Activated CD4-positive, alpha-beta memory T cell treated with anti-CD3 and anti-CD28 coated beads for 36 hours (primary cell): ENCODE measurements at regions of chr5 and their contacts with region 1.

Region 1: DNA sequence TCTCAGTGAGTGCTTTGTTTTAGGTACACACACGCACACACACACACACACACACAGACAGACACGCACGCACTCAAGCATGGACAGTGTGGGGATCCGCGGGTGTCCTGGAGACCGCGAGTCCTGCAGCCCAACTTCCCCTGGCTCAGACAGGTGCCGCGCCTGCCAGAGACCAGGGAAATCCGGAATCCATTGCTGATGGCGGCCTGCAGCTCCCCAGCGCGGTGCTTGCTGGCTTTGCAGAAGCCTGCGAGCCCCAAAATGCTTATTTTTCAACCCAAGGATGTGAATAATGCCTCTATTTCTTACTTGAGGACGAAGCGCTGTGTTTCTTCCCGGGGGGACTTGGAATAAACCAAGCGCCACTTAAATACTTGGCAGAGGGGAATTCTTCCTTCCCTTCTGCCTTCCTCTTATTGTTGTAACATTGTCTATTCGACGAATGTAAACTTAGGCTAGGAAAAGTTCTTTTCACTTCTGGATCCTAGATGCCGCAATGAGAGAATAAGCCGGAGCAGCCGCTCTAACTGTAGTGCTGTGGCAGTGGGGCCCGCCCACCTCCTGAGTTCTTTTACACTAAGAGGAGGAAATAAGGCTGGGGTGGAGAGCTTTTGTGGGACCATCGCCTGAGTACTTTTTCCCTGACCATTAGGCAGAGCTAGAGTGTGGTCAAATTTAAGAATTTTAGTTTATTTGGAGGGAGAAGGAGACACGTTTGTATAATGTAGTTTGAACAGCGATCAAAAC is 802 bp downstream of the ITGA2 start:
- DNase-seq: peak; percentile 55
- H3K4me3 Mint-ChIP-seq: peak overlapping the region; percentile 73
- H3K27ac Mint-ChIP-seq: no peak overlapping the region
- H3K4me1 Mint-ChIP-seq: peaks cover 26% of the 10 kb centered on the region
- H3K27me3 Mint-ChIP-seq: peaks cover 9% of the 10 kb centered on the region

Region 2: DNA sequence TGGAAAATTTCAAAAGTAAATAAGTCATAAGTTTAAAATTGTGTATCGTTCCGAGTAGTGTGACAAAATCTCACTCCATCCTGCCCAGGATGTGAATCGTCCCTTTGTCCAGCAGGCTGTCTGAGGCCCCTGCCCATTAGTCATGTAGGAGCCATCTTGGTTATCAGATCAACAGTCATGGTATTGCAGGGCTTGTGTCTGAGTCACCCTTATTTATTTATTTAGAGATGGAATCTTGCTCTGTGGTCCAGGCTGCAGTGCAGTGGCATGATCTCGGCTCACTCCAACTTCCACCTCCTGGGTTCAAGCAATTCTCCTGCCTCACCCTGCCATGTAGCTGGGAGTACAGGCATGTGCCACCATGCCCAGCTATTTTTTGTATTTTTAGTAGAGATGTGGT is 29.4 kb after region 1 on chr5:
- CTCF ChIA-PET with region 1: no interaction called
- POLR2A ChIA-PET with region 1: no interaction called
- intact Hi-C with region 1: no loop called
- DNase-seq: no peak
- H3K4me3 Mint-ChIP-seq: no peak overlapping the region
- H3K27ac Mint-ChIP-seq: no peak overlapping the region
- H3K4me1 Mint-ChIP-seq: peaks cover 14% of the 10 kb centered on the region
- H3K27me3 Mint-ChIP-seq: peaks cover 2% of the 10 kb centered on the region

Region 3: GRCh38 chr5:53035868-53036381 is 46.0 kb after region 1 on chr5:
- CTCF ChIA-PET with region 1: interaction called, 11 read pairs
- POLR2A ChIA-PET with region 1: interaction called, 6 read pairs
- intact Hi-C with region 1: loop called (anchors 1 kb)
- DNase-seq: no peak
- H3K4me3 Mint-ChIP-seq: no peak overlapping the region
- H3K27ac Mint-ChIP-seq: no peak overlapping the region
- H3K4me1 Mint-ChIP-seq: peaks cover 38% of the 10 kb centered on the region
- H3K27me3 Mint-ChIP-seq: peaks cover 5% of the 10 kb centered on the region

Region 4: GRCh38 chr5:53041071-53041692 is 51.2 kb after region 1 on chr5:
- CTCF ChIA-PET with region 1: interaction called, 3 read pairs
- POLR2A ChIA-PET with region 1: interaction called, 6 read pairs
- intact Hi-C with region 1: loop called (anchors 1 kb)
- DNase-seq: peak; percentile 32
- H3K4me3 Mint-ChIP-seq: peak overlapping the region; percentile 25
- H3K27ac Mint-ChIP-seq: no peak overlapping the region
- H3K4me1 Mint-ChIP-seq: peaks cover 42% of the 10 kb centered on the region
- H3K27me3 Mint-ChIP-seq: peaks cover 7% of the 10 kb centered on the region

Region 5: DNA sequence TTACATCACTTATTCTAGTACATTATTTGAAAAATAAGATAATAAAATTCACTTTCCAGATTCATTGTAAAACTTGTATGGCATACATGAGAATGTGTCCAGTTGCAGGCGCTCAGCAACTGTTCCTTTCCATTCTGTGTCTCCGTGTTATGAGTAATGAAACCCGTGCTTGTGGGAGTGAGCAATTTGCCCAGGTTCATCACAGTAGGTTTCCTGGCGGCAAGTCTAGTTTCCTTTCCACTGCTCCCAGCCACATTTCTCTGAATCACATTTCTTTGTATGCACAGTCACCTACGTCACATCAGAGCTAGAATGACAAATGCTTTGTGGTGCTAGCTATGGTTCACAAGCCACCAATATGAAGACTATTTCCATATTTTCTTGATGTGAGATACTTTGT is 79.7 kb after region 1 on chr5:
- CTCF ChIA-PET with region 1: no interaction called
- POLR2A ChIA-PET with region 1: no interaction called
- intact Hi-C with region 1: loop called (anchors 1 kb)
- DNase-seq: peak; percentile 86
- H3K4me3 Mint-ChIP-seq: no peak overlapping the region
- H3K27ac Mint-ChIP-seq: peak overlapping the region; percentile 10
- H3K4me1 Mint-ChIP-seq: peaks cover 18% of the 10 kb centered on the region
- H3K27me3 Mint-ChIP-seq: peaks cover 7% of the 10 kb centered on the region

Region 6: GRCh38 chr5:53095931-53096525 is 106.1 kb after region 1 on chr5:
- CTCF ChIA-PET with region 1: interaction called, 7 read pairs
- POLR2A ChIA-PET with region 1: interaction called, 3 read pairs
- intact Hi-C with region 1: loop called (anchors 2 kb)
- DNase-seq: peak; percentile 78
- H3K4me3 Mint-ChIP-seq: no peak overlapping the region
- H3K27ac Mint-ChIP-seq: no peak overlapping the region
- H3K4me1 Mint-ChIP-seq: no peaks in the 10 kb centered on the region
- H3K27me3 Mint-ChIP-seq: no peaks in the 10 kb centered on the region